ENCODE measurements at regions of chr5 and their contacts with region 1.

Region 1: GRCh38 chr5:5492087-5492933 is 69.8 kb downstream of the ICE1 start:
- DNase-seq: peak; percentile 53 to 58
- H3K4me3 ChIP-seq: no peak overlapping the region
- H3K4me1 ChIP-seq: peaks cover 5% of the 10 kb centered on the region; the same call in 1 of the 2 replicates
- H3K27me3 ChIP-seq: no peaks in the 10 kb centered on the region

Region 2: DNA sequence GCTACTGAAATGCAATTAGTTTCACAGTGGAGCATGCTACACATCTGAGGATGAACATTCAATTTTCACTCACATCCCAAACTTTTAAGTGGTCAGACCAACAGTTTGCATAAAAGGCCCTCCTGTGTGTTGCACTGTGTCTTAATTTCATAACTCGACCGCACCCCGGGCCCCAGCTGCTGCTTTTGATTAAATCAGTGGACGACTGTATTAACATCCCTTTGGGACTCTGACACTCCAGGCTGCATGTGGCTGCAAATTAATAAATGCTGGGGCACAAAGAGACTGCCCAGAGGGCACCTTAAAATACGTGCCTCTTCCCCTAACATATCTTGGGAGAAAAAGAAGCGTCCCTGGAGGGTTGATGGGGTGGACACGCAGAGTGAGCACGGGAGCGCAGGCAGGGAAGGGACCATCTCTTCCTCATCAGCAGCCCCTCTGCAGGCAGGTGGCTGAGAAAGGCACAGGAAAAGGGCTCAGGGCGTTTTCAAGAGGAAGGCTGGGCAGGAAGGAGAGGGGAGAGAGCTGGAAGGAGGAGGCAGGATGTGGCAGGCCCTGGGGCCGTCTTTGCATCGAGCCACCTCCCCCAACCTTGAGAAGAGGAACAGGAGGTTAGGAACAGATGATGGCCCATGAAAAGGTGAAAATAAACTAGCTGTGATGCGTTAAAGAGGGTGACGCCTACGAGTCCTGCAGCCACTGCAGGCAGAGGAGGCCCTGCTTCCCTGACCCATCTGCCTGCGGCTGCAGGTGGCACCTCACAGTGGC is 867.4 kb after region 1 on chr5:
- in situ Hi-C with region 1: loop called (anchors 25 kb)
- DNase-seq: no peak
- H3K4me3 ChIP-seq: no peak overlapping the region
- H3K4me1 ChIP-seq: no peaks in the 10 kb centered on the region
- H3K27me3 ChIP-seq: no peaks in the 10 kb centered on the region

Region 3: DNA sequence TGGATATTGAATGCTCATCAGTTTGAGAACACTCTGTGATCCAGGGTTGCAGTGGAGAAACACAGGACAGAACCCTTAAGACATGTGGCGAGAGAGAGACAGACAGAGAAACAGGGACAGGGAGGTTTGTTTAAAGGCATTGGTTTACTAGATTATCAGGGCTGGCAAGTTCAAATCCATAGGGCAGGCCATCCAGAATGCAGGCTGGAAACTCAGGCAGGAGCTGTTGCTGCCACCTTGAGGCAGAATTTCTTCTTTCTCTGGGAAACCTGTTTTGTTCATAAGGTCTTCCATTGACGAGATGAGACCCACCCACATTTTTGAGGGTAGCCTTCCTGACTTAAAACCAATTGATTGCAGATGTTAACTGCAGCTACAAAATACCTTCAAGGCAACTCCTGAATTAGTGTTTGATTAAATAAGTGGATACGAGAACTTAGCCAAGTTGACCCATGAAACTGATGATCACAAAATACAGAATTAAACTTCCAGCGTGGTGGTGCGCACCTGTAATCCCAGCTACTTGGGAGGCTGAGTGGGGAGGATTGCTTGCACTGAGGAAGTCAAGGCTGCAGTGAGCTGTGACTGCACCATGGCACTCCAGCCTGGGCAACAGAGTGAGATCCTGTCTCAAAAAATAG is 1084.7 kb after region 1 on chr5:
- in situ Hi-C with region 1: loop called (anchors 25 kb)
- DNase-seq: peak; percentile 19 to 42
- H3K4me3 ChIP-seq: no peak overlapping the region
- H3K4me1 ChIP-seq: no peaks in the 10 kb centered on the region
- H3K27me3 ChIP-seq: peaks cover 3% of the 10 kb centered on the region; the same call in 1 of the 2 replicates